AG04449 (cell line): ENCODE measurements at regions of chr1 and their contacts with region 1.

Region 1: DNA sequence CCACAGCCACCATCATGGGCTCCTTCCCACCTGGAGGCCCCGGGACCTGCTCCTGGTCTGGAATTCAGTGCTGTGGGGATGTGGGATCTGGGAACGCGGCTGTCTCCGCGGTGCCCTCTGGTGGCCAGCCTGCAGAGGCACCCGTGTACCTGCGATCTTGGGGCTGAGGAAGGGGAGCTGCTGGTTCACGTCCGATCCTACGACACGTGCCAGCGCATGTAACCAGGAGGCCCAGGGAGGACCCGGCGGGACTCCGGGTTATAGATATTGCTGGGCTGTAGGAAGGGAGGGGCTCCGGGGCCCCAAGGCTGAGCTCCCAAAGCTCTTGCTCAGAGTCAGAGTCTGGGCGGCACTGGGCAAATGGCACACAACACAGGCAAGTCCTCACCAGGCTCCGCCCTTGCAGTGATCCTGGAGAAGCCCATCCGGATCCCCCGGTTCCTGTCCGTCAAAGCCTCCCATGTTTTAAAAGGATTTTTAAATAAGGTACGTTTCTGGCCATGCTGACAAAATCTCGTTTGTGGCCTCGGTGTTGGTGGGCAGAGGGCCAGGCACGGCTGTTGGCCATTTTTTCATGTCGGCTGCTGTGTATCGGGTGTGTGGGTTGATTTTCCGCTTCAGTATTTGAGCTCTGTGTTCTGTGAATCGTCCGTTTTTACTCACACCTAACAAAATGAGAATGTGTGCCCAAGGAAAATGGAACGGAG is 20.1 kb downstream of the FAAP20 start:
- DNase-seq: peak; percentile 5
- H3K4me3 ChIP-seq: no peak overlapping the region
- CTCF ChIP-seq: peak; percentile 97

Region 2: DNA sequence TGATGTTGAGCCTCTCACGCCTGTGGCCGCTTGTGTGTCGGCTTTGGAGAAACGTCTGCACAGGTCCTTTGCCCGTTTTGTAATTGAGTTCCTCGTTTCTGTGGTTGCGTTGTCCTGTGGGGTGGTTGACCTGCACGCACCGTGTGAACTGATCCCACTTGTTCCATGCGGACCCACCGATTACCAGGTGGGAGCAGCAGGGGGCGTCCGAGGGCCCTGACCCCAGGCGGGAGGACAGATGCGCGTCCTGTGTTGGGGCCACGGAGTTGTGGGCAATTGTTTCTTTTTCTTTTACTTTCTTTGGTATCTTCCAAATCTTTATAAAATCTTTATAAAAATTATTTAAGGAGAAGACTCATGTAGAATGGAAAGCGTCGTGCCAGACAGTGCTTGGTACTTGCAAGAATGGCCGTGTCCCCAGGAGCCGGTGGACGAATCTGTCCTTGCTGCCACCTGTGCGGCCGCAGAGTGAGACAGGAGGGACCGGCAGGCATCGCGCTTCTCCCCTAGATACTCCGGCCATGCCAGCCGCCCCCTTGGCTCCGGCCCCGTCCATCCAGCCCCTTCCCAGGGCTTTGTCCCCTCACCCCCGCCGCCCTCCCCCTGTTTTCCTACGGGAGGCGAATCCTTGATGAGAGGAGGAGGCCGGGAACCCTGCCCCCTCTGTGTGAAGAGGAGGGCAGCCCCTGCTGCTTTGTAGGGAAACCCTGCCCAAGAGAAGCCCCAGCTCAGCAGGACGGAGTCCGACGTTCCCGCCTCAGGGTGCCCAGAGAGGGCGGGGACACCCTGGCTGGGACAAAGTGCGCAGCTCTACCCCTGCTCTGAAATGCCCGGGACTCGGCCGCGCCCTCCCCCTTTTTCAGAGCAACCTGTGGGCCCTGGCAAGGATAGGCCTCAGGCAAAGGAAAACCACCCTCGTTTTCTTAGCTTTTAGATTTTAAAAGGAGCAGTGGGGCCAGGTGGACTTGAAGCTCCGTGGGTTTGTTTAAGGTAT is 82.6 kb before region 1 on chr1:
- CTCF ChIA-PET with region 1: interaction called, 19 read pairs
- POLR2A ChIA-PET with region 1: no interaction called
- DNase-seq: no peak
- H3K4me3 ChIP-seq: no peak overlapping the region
- CTCF ChIP-seq: peak; percentile 73

Region 3: DNA sequence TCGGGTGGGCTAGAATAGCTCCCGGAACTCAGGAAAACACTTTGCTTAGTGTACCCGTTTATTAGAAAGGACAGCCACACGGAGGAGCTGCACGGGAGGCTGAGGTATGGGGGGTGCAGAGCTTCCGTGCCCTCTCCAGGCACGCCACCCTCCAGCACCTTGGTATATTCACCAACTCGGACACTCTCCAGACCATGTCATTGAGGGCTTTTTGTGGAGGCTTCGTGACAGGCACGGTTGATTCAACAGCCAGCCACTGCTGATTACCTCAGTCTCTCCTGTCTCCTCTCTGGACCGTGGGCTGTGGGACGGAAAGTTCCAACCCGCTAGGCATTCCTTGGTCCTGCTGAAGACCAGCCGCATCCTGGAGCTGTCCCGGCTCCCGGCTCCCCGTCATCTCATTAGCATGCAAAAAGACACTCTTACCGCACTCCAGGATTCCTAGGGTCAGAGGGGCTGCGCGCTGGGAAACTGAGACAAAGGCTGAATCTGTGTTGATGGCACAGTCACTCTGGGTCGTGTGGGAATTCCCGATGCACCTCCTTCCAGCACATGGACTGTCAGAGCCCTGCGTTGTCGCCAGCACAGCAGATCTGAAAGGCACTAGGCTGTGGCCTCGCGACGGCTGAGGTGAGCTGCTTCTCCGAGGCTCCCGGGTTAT is 58.7 kb before region 1 on chr1:
- CTCF ChIA-PET with region 1: interaction called, 14 read pairs
- POLR2A ChIA-PET with region 1: no interaction called
- DNase-seq: no peak
- H3K4me3 ChIP-seq: no peak overlapping the region
- CTCF ChIP-seq: no peak

Region 4: DNA sequence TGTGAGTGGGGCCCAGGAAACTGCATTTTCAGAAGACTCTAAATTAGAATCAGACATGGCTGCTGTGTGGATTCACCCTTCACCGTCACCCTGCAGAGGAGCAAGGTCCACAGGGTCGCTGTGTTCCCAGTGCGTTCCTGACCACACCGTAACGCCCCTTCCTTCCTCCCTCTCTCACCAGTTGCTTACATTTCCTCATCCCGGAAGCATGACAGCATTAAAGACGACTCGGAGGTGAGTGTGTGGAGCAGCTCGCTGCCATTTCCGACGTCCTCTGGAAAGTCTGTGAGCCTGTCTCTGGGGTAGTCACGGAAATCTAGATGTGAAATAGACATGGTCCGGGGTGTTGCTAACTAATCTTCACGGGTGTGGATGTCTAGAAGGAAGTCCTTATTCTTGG is 25.8 kb before region 1 on chr1:
- CTCF ChIA-PET with region 1: interaction called, 23 read pairs
- POLR2A ChIA-PET with region 1: no interaction called
- DNase-seq: no peak
- H3K4me3 ChIP-seq: no peak overlapping the region
- CTCF ChIP-seq: no peak

Region 5: DNA sequence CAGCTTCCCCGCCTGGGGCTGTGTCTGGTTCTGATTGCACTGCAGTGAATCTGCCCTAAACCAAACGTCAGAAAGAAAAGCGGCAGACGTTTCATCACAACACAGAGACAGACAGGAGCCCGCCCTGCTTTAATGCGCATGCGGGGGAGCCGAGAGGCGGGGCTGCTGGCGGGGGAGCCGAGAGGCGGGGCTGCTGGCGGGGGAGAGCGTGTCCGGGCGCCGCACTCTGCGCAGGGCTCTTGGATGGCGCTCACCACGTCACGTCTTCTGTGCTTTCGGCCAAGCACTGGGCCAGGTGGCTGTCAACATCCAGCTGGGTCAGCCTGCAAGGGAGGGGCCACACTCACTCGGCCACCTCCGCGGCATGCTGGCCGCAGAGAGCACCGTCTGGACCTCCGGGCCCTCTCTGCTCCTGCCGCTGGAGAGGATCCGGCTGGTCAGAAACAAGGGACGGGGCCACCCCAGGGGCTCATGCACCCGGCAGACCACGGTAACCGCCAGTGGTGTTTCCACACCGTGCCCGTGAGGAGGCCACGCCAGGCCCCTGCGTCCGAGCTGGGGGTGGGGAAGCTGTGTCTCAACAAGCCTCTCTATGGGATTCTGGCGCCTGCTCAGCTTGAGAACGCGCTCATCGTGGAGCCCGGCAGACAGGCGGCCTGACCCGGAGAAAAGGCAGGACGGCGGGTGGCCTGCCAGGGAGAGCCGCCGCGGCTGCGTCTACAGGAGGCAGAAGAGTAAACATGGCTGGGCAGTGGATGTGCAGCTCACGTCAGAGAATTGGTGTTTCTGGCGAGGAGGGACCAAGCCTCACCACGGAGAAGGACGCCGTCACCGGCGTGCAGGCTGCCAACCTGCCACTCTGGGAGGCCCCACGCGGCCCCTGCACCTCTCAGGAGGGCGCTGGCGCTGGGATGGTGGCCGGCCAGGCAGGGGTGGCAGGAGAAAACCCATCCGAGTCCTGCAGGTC is 15.2 kb after region 1 on chr1:
- CTCF ChIA-PET with region 1: interaction called, 56 read pairs
- POLR2A ChIA-PET with region 1: no interaction called
- DNase-seq: no peak
- H3K4me3 ChIP-seq: peak overlapping the region; percentile 62
- CTCF ChIP-seq: no peak

Region 6: GRCh38 chr1:2240270-2241156 is 66.0 kb after region 1 on chr1:
- CTCF ChIA-PET with region 1: no interaction called
- POLR2A ChIA-PET with region 1: no interaction called
- DNase-seq: no peak
- H3K4me3 ChIP-seq: no peak overlapping the region
- CTCF ChIP-seq: no peak

Region 7: GRCh38 chr1:2381741-2382620 is 207.5 kb after region 1 on chr1:
- CTCF ChIA-PET with region 1: interaction called, 42 read pairs
- POLR2A ChIA-PET with region 1: no interaction called
- DNase-seq: peak; percentile 21
- H3K4me3 ChIP-seq: no peak overlapping the region
- CTCF ChIP-seq: peak; percentile 99